Posterior vena cava (tissue), 2 donors: ENCODE measurements at regions of chr15 and their contacts with region 1.

Region 1: DNA sequence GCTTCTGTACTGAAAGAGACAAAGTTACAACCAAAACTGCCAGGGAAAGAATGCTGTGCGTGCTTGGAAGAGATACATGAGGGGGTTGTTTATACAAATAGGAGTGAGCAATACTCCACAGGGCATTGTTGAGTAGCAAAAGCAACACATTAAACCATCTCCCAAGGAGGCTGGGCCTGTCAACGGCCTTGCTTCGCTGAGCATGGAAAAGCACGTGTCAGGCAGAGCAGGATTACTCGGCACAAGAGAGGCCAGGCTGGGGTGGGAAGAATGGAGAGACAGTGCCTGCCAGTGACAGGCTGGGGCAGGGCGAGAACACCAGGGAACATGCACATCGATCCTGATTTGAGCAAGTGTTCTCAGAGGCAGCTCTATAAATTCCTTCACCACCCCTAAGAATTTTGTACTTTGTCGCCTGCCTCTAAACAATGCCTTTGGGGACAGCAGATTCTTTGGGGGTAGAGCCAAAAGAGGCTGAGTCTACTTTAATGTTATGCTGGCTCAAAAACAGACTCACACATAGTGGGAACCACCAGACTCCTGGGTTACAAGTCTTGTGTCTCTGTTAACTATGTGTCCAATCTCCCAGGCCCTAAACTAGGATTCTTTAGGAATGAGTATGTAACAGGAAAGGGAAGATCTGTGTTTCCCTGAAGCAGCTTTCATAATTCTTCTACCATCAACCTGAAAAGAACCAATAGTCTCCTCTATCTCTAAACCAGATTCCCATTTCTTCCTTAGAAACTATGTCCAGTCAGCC is 67.2 kb downstream of the LIPC start:
- DNase-seq: no peak

Region 2: GRCh38 chr15:58460108-58460790 is 38.8 kb before region 1 on chr15:
- intact Hi-C with region 1: loop called in 1 of 2 experiments (anchors 1 kb)
- DNase-seq: no peak

Region 3: DNA sequence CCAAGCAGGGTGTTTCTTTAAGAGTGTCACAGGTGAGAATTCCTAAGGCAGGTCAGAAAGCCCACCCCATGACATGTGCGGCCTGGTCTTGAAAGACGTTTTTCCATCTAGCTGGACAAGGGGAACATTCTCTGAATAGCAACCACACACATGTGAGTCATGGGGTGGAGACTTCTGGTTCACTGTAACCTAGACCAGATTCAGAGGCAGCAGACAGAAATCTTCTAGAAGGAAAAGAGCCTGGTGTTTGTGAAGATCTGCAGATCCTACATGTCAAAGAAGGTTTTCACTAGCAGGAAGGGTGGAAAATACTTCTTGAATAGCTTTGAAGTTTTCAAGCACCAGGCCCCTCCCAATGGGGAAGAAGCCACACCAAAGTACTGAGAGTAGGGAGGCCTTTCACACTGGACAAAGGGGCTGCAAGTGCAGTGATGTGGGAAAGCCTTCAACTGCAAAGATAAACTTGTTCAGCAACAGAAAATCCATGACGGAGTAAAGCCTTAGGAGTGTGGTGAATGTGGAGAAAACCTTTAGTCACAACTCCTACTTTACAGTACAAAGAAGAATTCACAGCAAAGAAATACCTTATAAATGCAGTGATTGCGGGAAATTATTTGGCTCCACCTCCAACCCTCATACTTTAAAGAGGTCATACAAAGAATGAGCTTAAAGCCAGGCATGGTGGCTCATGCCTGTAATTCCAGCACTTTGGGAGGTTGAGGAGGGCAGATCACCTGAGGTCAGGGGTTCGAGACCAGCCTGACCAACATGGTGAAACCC is 232.9 kb after region 1 on chr15:
- intact Hi-C with region 1: loop called in 1 of 2 experiments (anchors 10 kb)
- DNase-seq: no peak